GM13977 (cell line): ENCODE measurements at regions of chrX and their contacts with region 1.

Region 1: DNA sequence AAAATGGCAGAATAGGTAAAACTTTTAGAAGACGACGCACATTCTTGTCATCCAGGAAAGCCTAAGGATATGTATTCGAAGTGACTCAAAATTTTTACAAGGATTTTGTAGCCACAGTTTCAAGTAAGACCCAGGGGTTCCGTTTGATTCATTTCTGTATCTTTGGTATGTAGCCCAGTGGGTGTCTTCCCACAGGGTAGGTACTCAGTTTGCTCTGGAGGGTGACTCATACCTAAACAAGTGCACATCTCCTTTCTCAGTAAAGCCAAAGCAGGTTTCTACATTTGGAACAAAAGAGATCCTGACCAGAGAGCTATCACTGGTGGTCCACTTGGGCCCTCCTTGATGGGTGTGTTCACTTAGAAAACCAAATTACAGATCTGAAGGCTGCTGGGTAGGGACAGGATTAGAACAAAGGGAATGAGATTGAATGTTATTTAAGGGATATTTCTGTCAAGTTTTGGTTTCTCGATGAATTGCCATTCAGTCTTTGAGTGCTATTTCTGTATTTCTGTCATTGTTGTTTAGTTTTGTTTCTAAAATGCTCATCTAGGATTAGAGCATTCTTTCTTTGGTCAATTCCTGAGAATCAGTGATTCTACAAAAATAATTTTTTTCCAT is 56.1 kb downstream of the PLS3 start:
- DNase-seq: peak; percentile 54
- CTCF ChIP-seq: no peak

Region 2: GRCh38 chrX:115330498-115331168 is 286.4 kb before region 1 on chrX:
- in situ Hi-C with region 1: loop called (anchors 25 kb)
- DNase-seq: peak; percentile 59
- CTCF ChIP-seq: peak; percentile 83